ENCODE measurements at regions of chr15 and their contacts with region 1.

Region 1: DNA sequence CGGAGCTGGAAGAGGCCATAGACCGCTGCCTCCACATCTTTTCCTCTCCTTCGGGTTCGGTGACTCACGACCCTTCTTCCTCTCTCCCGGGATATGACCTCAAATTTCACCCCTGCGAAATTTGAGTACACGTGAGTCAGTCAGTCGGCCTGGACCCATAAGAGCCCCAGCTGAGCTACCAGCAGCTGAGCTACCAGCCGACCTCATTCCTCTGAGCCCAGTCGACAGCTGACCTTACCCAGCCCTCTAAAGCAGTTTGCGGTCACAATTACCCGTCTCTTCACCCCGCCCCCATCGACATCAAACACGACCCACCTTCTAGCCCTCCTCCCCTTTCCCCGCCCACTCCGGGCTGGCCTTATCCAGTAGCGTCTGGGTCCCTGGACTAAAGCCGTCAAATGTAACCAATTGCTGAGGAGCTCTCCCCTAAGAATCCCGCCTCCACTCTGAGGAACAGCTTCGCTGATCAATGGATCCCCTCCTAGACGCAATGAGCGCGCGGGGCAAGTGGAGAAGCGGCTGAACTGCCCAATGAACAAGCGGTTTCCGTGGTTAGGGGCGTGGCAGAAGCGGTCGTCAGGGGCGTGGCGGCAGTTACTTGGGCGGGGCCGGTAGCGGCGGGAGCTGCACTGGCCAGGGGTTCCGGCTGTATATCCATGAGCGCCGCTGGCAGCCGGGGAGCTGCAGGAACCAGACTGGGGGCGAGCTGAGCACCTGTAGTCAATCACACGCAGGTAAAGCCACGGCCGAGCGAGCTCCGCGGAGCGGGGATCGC is at the start of gene ABHD2:
- DNase-seq: peak; percentile 100
- H3K4me3 ChIP-seq: peak within 1 kb of the TSS; percentile 88
- H3K27ac ChIP-seq: peak within 1 kb of the TSS; percentile 25
- H3K4me1 ChIP-seq: peaks cover 28% of the 10 kb centered on the region
- CTCF ChIP-seq: no peak
- total RNA-seq, gene ABHD2: 12.6 and 16.1 TPM in 2 replicates

Region 2: GRCh38 chr15:88913017-88913849 is 174.8 kb before region 1 on chr15 and contains the start of gene MFGE8:
- CTCF ChIA-PET with region 1: no interaction called
- POLR2A ChIA-PET with region 1: no interaction called
- intact Hi-C with region 1: loop called (anchors 5 kb)
- DNase-seq: peak; percentile 74
- H3K4me3 ChIP-seq: peak within 1 kb of the TSS; percentile 72
- H3K27ac ChIP-seq: peak within 1 kb of the TSS; percentile 34
- H3K4me1 ChIP-seq: peaks cover 8% of the 10 kb centered on the region
- CTCF ChIP-seq: 0 out of 2 replicates have a peak, but pooled peaks have one; percentile 13
- total RNA-seq, gene MFGE8: 9.8 and 11.8 TPM in 2 replicates

Region 3: DNA sequence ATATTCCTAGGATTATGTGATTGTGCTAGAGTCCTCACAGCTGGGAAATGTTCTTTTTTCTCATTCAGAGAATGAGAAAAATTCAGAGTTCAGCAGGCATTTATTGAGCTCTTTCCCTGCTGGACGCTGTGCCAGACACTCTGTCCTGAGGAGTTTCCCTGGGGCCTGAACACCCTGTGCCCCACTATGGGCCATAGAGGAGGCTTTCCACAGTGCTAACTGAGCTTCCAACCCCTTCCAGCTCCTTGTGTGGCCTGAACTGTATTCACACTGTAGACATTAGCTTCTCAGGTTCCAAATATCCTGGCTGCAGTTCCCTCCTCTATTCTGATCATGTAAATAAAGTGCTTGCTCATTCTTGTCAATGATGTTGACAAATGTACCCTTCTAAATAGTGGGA is 10.3 kb after region 1 on chr15:
- CTCF ChIA-PET with region 1: no interaction called
- POLR2A ChIA-PET with region 1: interaction called, 15 read pairs
- intact Hi-C with region 1: no loop called
- DNase-seq: no peak
- H3K4me3 ChIP-seq: no peak overlapping the region
- H3K27ac ChIP-seq: no peak overlapping the region
- H3K4me1 ChIP-seq: no peaks in the 10 kb centered on the region
- CTCF ChIP-seq: no peak

Region 4: GRCh38 chr15:89543389-89543788 is 455.4 kb after region 1 on chr15:
- CTCF ChIA-PET with region 1: no interaction called
- POLR2A ChIA-PET with region 1: no interaction called
- intact Hi-C with region 1: no loop called
- DNase-seq: no peak
- H3K4me3 ChIP-seq: no peak overlapping the region
- H3K27ac ChIP-seq: no peak overlapping the region
- H3K4me1 ChIP-seq: no peaks in the 10 kb centered on the region
- CTCF ChIP-seq: no peak